GM12878 (cell line): ENCODE measurements at regions of chr13 and their contacts with region 1.

Region 1: DNA sequence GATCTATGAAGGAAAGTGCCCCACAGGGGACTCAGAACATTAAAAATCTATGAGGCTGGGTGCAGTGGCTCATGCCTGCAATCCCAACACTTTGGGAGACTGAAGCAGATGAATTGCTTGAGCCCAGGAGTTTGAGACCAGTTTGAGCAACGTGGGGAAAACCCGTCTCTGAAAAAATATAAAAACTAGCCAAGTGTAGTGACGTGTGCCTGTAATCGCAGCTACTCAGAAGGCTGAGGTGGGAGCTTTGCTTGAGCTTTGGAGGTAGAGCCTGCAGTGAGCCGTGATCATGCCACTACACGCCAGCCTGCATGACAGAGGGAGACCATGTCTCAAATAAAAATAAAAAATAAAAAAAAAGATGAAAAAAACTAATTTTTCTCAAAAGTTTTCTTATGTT is 1070.6 kb downstream of the PCDH9 start:
- DNase-seq: no peak
- ATAC-seq: peak; percentile 94
- H3K4me3 ChIP-seq: no peak overlapping the region
- H3K27ac ChIP-seq: no peak overlapping the region
- H3K4me1 ChIP-seq: no peaks in the 10 kb centered on the region
- H3K27me3 ChIP-seq: no peaks in the 10 kb centered on the region
- CTCF ChIP-seq: no peak
- EP300 ChIP-seq: no peak
- POLR2A ChIP-seq: no peak
- RAD21 ChIP-seq: no peak

Region 2: DNA sequence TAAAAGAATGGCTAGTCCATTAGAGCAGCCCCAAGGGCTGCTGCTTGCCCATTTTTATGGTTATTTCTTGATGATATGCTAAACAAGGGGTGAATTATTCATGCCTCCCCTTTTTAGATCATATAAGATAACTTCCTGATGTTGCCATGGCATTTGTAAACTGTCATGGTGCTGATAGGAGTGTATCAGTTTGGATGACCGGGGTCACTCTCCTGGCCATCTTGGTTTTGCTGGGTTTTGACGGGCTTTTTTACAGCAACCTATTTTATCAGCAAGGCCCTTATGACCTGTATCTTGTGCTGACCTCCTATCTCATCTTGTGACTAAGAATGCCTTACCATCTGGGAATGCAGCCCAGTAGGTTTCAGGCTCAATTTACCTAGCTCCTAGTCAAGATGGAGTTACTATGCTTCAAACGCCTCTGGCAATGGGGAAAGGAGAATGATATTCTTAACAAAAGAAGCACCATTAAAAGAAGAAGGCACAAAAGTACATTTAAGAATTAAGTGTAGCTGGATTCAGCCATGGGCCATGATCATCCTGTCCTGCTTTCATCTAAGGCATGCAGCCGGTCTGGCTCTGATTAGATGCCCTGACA is 85.4 kb before region 1 on chr13:
- CTCF ChIA-PET with region 1: no interaction called
- POLR2A ChIA-PET with region 1: no interaction called
- RAD21 ChIA-PET with region 1: no interaction called
- SMC1A ChIA-PET with region 1: no interaction called
- in situ Hi-C with region 1: no loop called
- intact Hi-C with region 1: no loop called
- DNase-seq: no peak
- ATAC-seq: no peak
- H3K4me3 ChIP-seq: no peak overlapping the region
- H3K27ac ChIP-seq: no peak overlapping the region
- H3K4me1 ChIP-seq: no peaks in the 10 kb centered on the region
- H3K27me3 ChIP-seq: no peaks in the 10 kb centered on the region
- CTCF ChIP-seq: no peak
- EP300 ChIP-seq: no peak
- POLR2A ChIP-seq: no peak
- RAD21 ChIP-seq: no peak

Region 3: DNA sequence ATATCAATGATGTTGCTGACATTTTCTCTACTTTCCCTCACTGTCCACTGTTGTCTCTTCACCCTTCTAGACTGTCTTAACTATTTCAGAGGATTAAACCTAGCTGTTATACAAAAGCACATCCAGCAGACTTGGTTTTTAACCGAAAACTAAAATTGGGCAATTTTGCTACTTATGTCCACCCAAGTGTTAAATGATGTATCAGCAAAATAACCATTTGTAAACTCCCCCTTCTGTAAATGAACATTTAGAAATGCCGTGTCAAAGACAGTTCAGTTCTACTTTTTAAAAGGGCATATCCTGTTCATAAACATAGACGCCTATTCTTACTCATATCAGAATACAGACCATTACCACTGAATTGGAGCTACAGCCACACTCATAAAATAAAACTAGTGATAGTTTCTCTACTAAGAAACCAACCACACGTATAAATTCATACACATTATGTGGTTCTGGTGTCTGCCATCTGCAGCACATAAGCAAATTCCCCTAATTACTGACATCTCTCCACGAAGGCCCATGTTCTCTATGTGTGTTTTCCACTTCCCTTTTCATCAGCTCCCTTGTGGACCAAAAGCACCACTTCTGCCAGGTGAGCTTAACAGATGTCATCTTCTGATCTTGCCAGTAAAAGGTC is 21.2 kb before region 1 on chr13:
- CTCF ChIA-PET with region 1: interaction called, 7 read pairs
- POLR2A ChIA-PET with region 1: interaction called, 4 read pairs
- RAD21 ChIA-PET with region 1: interaction called, 6 read pairs
- SMC1A ChIA-PET with region 1: interaction called, 18 read pairs
- in situ Hi-C with region 1: no loop called
- intact Hi-C with region 1: no loop called
- DNase-seq: peak; percentile 82
- ATAC-seq: peak; percentile 90
- H3K4me3 ChIP-seq: no peak overlapping the region
- H3K27ac ChIP-seq: no peak overlapping the region
- H3K4me1 ChIP-seq: peaks cover 3% of the 10 kb centered on the region; the same call in 1 of the 2 replicates
- H3K27me3 ChIP-seq: no peaks in the 10 kb centered on the region
- CTCF ChIP-seq: no peak
- EP300 ChIP-seq: peak; percentile 85 to 94; a peak in 3 of 4 replicates
- POLR2A ChIP-seq: no peak
- RAD21 ChIP-seq: no peak